Panc1 (cell line): ENCODE measurements at regions of chr7 and their contacts with region 1.

Region 1: DNA sequence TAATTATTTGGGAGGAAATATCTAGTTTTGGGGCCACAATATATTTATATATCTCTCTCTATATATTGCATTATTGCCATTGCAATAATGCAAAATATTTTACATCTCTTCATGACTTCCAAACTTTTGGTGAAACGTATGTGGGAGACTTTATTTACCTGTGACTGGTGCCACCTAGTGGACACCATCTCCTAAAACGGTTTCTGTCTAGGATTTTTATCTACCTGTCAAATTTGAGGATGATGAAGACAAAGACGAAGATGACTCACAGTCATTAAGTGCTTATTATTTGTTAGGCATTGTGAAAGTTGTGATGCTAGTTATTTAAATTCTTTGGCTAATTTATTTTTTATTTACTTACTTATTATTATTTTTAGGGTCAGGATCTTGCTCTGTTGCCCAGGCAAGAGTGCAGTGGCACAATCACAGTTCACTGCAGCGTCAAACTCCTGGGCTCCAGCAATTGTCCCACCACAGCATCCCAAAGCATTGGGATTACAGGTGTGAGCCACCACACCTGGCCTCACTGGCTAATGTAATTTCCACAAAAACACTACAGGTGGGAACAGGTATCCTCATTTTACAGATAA is 18.7 kb upstream of the CBLL1 start:
- DNase-seq: peak; percentile 32
- ATAC-seq: peak; percentile 56; the same call in 1 of the 2 replicates
- H3K4me3 ChIP-seq: no peak overlapping the region
- H3K27ac ChIP-seq: no peak overlapping the region
- H3K4me1 ChIP-seq: no peaks in the 10 kb centered on the region
- H3K27me3 ChIP-seq: peaks cover 9% of the 10 kb centered on the region; the same call in 1 of the 2 replicates
- CTCF ChIP-seq: peak; percentile 74

Region 2: DNA sequence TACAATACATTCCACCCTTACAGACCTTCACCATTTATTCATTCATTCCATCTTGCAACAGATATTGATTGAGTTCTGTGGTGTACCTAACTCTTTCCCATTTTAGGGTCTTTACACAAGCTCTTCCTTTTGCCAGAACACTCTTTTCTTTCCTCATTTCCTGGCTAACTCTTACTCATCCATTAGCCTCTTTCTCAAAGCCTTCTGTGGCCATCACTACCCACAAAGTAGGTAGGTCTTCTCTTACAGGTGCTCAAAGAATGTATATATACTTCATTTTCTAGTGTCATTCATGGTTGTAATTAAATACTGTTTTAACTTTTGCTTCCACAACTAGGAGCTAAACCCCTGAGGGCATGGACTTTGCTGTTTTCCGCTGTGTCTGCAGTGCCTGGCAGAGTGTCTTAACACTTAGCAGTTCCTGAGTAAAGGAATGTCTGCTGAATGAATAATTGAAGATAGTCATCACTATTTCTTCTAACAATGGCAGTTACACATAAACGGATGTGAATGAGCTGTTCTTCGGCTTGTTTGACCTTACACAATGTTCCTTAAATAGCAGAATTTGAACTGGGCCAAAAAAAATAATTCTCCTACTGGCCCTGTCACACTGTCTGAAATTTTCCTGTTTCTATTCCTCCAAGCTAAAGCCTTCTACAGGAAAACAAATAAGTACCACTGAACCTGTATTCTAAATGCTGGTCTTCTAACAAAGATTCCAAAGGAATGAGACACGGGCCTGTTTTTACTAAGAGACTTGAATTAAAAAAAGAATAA is 130.1 kb before region 1 on chr7:
- CTCF ChIA-PET with region 1: no interaction called
- POLR2A ChIA-PET with region 1: no interaction called
- in situ Hi-C with region 1: no loop called
- intact Hi-C with region 1: loop called (anchors 10 kb)
- DNase-seq: peak; percentile 77
- ATAC-seq: peak; percentile 92
- H3K4me3 ChIP-seq: no peak overlapping the region
- H3K27ac ChIP-seq: no peak overlapping the region
- H3K4me1 ChIP-seq: no peaks in the 10 kb centered on the region
- H3K27me3 ChIP-seq: no peaks in the 10 kb centered on the region
- CTCF ChIP-seq: no peak

Region 3: GRCh38 chr7:107785926-107786325 is 60.7 kb after region 1 on chr7:
- CTCF ChIA-PET with region 1: no interaction called
- POLR2A ChIA-PET with region 1: no interaction called
- in situ Hi-C with region 1: no loop called
- intact Hi-C with region 1: no loop called
- DNase-seq: no peak
- ATAC-seq: no peak
- H3K4me3 ChIP-seq: no peak overlapping the region
- H3K27ac ChIP-seq: no peak overlapping the region
- H3K4me1 ChIP-seq: no peaks in the 10 kb centered on the region
- H3K27me3 ChIP-seq: peaks cover 12% of the 10 kb centered on the region
- CTCF ChIP-seq: no peak